GM10248 (cell line): ENCODE measurements at regions of chr2 and their contacts with region 1.

Region 1: DNA sequence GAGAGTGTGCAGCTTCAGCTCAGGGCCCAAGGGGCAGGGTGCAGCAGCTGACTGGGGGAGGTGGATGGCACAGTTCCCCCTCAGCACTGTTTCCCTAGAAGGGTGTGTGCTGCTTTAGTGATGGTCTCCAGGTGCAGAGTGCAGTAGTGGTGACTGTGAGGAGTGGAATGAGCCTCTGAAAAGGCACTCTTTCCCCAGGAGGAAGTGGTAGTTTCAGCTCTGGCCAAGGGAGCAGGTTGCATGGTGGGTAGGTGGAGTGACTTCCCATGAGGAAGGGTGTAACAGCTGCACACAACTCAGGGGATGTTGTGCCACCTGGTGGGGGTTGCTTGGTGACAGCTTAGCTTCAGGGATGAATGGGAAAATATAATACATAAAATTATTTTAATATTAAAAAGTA is 251.5 kb upstream of the NXPH2 start:
- DNase-seq: peak; percentile 8
- CTCF ChIP-seq: peak; percentile 3

Region 2: GRCh38 chr2:138922973-138923563 is 108.7 kb before region 1 on chr2:
- CTCF ChIA-PET with region 1: interaction called, 13 read pairs
- POLR2A ChIA-PET with region 1: no interaction called
- DNase-seq: no peak
- CTCF ChIP-seq: peak; percentile 32

Region 3: DNA sequence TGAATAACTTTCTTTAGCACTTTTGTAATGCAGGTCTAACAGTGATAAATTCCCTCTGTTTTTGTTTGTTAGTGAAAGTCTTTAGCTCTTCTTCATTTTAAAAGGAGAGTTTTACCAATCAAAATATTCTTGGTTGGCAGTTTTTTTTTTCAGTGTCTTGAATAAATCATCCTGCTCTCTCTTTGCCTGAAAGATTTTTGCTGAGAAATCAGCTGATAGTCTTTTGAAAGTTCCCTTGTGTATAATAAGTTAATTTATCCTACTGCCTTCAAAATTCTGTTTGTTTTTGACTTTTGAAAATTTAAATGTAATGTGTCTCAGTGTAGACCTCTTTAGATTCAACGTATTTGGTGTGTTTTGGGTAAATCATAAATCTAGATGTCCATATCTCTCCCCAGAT is 45.8 kb before region 1 on chr2:
- CTCF ChIA-PET with region 1: no interaction called
- POLR2A ChIA-PET with region 1: no interaction called
- DNase-seq: no peak
- CTCF ChIP-seq: no peak